Activated naive CD4-positive, alpha-beta T cell treated with anti-CD3 and anti-CD28 coated beads for 36 hours (primary cell): ENCODE measurements at regions of chr1 and their contacts with region 1.

Region 1: DNA sequence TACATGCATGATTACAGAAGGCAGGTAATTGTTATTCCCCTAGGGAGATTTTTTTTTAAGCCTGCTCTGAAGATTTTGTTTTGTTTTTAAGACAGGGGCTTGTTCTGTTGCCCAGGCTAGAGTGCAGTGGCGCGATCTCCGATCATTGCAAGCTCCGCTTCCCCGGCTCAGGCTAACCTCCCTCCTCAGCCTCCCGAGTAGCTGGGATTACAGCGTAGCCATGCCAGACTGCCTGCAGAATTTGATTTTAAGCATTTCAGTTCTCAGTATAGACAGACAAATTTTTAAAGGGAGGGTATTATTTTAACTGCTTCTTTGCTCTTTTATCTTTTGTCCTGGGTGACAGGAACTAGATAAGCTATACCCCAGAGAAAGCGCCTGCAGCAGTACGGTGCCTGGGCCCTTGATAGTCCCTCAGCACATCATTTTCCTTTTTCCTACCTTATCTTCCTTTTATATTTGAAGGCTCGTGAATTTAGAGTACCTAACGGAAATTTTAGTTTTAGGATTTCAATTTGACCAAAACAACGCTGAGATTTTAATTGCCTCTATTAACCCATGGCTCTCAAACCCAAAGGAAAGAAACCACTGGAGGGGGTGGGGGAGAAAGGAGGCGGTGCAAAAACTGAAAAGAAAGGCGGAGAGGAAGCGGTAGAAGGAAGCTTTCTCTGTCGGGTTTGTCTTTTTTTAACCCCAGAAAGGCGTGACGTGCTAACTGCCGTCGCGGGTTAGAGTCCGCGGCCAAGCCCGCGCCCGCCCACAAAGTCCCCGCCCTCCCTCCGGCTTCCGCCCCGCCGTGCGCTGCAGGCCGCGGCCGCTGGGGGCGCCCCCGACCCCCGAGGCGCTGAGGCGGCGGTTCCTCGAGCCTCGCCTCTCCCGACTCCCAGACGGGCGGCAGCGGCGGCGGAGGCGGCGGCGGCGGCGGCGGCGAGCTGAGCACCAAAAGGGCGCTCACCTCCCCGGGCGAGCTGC is at the start of gene EEIG2:
- DNase-seq: peak; percentile 92
- H3K4me3 Mint-ChIP-seq: peak within 1 kb of the TSS; percentile 94
- H3K27ac Mint-ChIP-seq: peak within 1 kb of the TSS; percentile 81
- H3K4me1 Mint-ChIP-seq: peaks cover 29% of the 10 kb centered on the region
- H3K27me3 Mint-ChIP-seq: no peaks in the 10 kb centered on the region
- total RNA-seq, gene EEIG2: 7.6 to 7.9 TPM

Region 2: GRCh38 chr1:107782217-107782845 is 777.2 kb before region 1 on chr1:
- CTCF ChIA-PET with region 1: interaction called, 3 read pairs
- intact Hi-C with region 1: loop called (anchors 1 kb)
- DNase-seq: peak; percentile 59
- H3K4me3 Mint-ChIP-seq: no peak overlapping the region
- H3K27ac Mint-ChIP-seq: no peak overlapping the region
- H3K4me1 Mint-ChIP-seq: peaks cover 23% of the 10 kb centered on the region
- H3K27me3 Mint-ChIP-seq: no peaks in the 10 kb centered on the region

Region 3: GRCh38 chr1:108199781-108200570 is 359.5 kb before region 1 on chr1 and contains the start of gene SLC25A24:
- CTCF ChIA-PET with region 1: interaction called, 7 read pairs
- intact Hi-C with region 1: loop called (anchors 5 kb)
- DNase-seq: peak; percentile 70
- H3K4me3 Mint-ChIP-seq: peak within 1 kb of the TSS; percentile 86
- H3K27ac Mint-ChIP-seq: no peak within 1 kb of the TSS
- H3K4me1 Mint-ChIP-seq: peaks cover 14% of the 10 kb centered on the region
- H3K27me3 Mint-ChIP-seq: no peaks in the 10 kb centered on the region
- total RNA-seq, gene SLC25A24: 5.2 to 5.5 TPM

Region 4: GRCh38 chr1:108512239-108512981 is 47.1 kb before region 1 on chr1:
- CTCF ChIA-PET with region 1: interaction called, 125 read pairs
- intact Hi-C with region 1: loop called (anchors 1 kb)
- DNase-seq: no peak
- H3K4me3 Mint-ChIP-seq: no peak overlapping the region
- H3K27ac Mint-ChIP-seq: no peak overlapping the region
- H3K4me1 Mint-ChIP-seq: no peaks in the 10 kb centered on the region
- H3K27me3 Mint-ChIP-seq: peaks cover 1% of the 10 kb centered on the region

Region 5: GRCh38 chr1:108590957-108591356 is 31.5 kb after region 1 on chr1:
- CTCF ChIA-PET with region 1: no interaction called
- intact Hi-C with region 1: loop called (anchors 1 kb)
- DNase-seq: no peak
- H3K4me3 Mint-ChIP-seq: no peak overlapping the region
- H3K27ac Mint-ChIP-seq: no peak overlapping the region
- H3K4me1 Mint-ChIP-seq: peaks cover 33% of the 10 kb centered on the region
- H3K27me3 Mint-ChIP-seq: no peaks in the 10 kb centered on the region

Region 6: GRCh38 chr1:108624055-108624454 is 64.6 kb after region 1 on chr1:
- CTCF ChIA-PET with region 1: no interaction called
- intact Hi-C with region 1: no loop called
- DNase-seq: no peak
- H3K4me3 Mint-ChIP-seq: no peak overlapping the region
- H3K27ac Mint-ChIP-seq: no peak overlapping the region
- H3K4me1 Mint-ChIP-seq: no peaks in the 10 kb centered on the region
- H3K27me3 Mint-ChIP-seq: no peaks in the 10 kb centered on the region

Region 7: GRCh38 chr1:108746372-108747205 is 187.1 kb after region 1 on chr1 and contains the start of gene STXBP3:
- CTCF ChIA-PET with region 1: no interaction called
- intact Hi-C with region 1: loop called (anchors 1 kb)
- DNase-seq: peak; percentile 100
- H3K4me3 Mint-ChIP-seq: peak within 1 kb of the TSS; percentile 94
- H3K27ac Mint-ChIP-seq: peak within 1 kb of the TSS; percentile 92
- H3K4me1 Mint-ChIP-seq: peaks cover 28% of the 10 kb centered on the region
- H3K27me3 Mint-ChIP-seq: no peaks in the 10 kb centered on the region
- total RNA-seq, gene STXBP3: 29.1 to 30.3 TPM

Region 8: DNA sequence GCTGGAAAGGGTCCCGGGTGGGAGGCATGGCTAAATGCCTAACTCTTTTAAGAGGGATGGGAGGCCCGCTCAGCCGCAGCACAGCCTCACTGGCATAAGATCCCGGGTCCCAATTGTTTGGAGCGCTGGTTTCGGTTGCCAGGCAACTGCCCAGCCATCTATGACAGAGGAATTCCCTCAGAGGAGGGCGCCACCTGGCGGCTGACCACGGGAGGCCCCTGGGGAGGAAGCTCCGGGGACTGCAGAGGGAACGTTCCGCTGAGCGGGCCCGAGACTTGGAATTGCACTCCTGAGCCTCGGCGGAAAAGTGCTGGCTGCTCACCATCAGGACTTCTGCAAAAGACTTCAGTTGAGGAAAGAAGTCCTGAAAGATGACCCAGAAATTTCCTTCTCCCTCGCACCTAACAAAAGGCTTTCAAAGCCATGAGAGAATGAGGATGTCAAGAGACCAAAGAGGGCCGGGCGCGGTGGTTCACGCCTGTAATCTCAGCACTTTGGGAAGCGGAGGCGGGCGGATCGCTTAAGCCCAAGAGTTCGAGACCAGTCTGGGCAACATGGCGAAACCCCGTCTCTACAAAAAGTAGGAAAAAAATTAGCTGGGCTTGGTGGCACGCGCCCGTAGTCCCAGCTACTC is 553.3 kb after region 1 on chr1:
- CTCF ChIA-PET with region 1: no interaction called
- intact Hi-C with region 1: loop called (anchors 5 kb)
- DNase-seq: peak; percentile 93
- H3K4me3 Mint-ChIP-seq: peak overlapping the region; percentile 80
- H3K27ac Mint-ChIP-seq: no peak overlapping the region
- H3K4me1 Mint-ChIP-seq: peaks cover 40% of the 10 kb centered on the region
- H3K27me3 Mint-ChIP-seq: peaks cover 4% of the 10 kb centered on the region